Caco-2 (cell line): ENCODE measurements at regions of chr22 and their contacts with region 1.

Region 1: DNA sequence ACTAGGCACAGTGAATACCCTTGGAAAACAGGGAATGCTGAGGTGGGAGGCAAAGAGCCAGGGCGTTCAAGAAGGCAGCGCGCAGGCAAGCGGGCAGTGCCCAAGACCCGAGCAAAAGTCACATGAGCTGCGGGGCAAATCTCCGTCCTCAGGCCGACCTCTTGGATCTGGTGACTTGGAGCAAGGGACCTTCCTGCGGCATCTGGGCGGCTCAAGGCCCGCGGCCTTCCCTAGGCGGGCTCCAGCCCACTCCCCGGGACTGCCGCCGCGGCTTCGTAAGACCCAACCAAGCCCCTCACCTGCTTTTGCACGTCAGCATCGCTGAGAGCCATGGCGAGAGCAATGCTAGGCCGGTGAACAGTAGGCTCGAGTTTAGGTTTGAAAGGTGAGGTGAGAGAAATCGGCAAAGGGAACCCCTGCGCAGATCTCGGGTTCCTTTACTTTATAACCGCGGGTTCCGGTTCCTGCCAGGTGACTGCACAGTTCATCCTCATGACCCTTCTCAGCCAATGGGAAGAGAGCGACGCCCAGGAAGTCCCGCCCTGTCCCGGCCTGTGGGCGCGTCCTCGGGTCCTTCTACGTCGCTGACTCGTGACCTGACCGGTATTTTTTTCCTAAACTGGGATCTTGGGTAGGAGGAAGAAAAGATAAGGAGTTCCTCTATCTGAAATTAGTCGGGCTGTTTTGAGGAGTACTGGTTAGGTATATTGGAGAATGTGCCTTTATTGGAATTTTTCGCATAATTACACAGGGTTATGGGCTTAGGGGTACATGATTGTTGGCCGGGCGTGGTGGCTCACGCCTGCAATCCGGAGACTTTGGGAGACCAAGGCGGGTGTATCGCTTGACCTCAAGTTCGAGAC is at the start of gene ATP6V1E1:
- DNase-seq: peak; percentile 96 to 97
- H3K4me3 ChIP-seq: peak within 1 kb of the TSS; percentile 89
- H3K4me3 Mint-ChIP-seq: peak within 1 kb of the TSS; percentile 86
- H3K27ac Mint-ChIP-seq: peak within 1 kb of the TSS; percentile 89
- H3K4me1 ChIP-seq: peaks cover 22% of the 10 kb centered on the region
- H3K4me1 Mint-ChIP-seq: peaks cover 10% of the 10 kb centered on the region
- H3K27me3 ChIP-seq: no peaks in the 10 kb centered on the region
- H3K27me3 Mint-ChIP-seq: no peaks in the 10 kb centered on the region
- CTCF ChIP-seq: no peak
- total RNA-seq, gene ATP6V1E1: 139 and 147 TPM in 2 replicates

Region 2: GRCh38 chr22:17570851-17571641 is 57.5 kb before region 1 on chr22:
- CTCF ChIA-PET with region 1: no interaction called
- POLR2A ChIA-PET with region 1: interaction called, 11 read pairs
- intact Hi-C with region 1: no loop called
- DNase-seq: no peak
- H3K4me3 ChIP-seq: no peak overlapping the region
- H3K4me3 Mint-ChIP-seq: no peak overlapping the region
- H3K27ac Mint-ChIP-seq: no peak overlapping the region
- H3K4me1 ChIP-seq: no peaks in the 10 kb centered on the region
- H3K4me1 Mint-ChIP-seq: peaks cover 9% of the 10 kb centered on the region
- H3K27me3 ChIP-seq: no peaks in the 10 kb centered on the region
- H3K27me3 Mint-ChIP-seq: no peaks in the 10 kb centered on the region
- CTCF ChIP-seq: no peak